SK-N-SH (cell line): ENCODE measurements at regions of chr4 and their contacts with region 1.

Region 1: GRCh38 chr4:152850377-152850776 is 70.6 kb downstream of the ARFIP1 start:
- DNase-seq: no peak
- H3K4me3 ChIP-seq: no peak overlapping the region
- H3K27ac ChIP-seq: no peak overlapping the region
- H3K4me1 ChIP-seq: no peaks in the 10 kb centered on the region
- H3K27me3 ChIP-seq: no peaks in the 10 kb centered on the region
- CTCF ChIP-seq: no peak
- EP300 ChIP-seq: no peak
- RAD21 ChIP-seq: no peak

Region 2: DNA sequence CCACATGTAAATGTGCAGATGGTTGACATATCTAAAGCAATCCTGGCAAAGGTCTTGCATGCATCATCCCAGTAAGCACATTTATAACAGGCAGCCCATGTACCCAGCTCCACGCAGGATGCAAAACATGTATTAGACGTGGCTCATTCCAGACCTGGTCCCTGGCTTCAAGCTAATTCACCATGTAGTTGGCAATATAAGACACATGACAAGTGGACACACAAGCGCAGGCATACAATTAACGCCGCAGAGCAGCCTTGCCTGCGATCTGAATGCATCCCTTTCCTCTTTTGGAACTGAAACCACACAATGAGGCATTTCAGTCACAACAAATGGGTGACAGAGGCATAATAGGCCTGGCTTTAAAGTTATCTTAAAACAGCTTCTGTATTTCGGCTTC is 239.4 kb after region 1 on chr4:
- CTCF ChIA-PET with region 1: interaction called, 19 read pairs
- POLR2A ChIA-PET with region 1: no interaction called
- DNase-seq: no peak
- H3K4me3 ChIP-seq: no peak overlapping the region
- H3K27ac ChIP-seq: no peak overlapping the region
- H3K4me1 ChIP-seq: peaks cover 0 to 3% of the 10 kb centered on the region in 2 experiments; a peak in 1 of 4 replicates
- H3K27me3 ChIP-seq: 0 out of 2 replicates have a peak, but pooled peaks cover 5% of the 10 kb centered on the region
- CTCF ChIP-seq: no peak
- EP300 ChIP-seq: no peak
- RAD21 ChIP-seq: no peak